ENCODE measurements at regions of chr1 and their contacts with region 1.

Region 1: GRCh38 chr1:25247024-25247828 is at the start of gene RSRP1:
- DNase-seq: peak; percentile 99
- H3K4me3 Mint-ChIP-seq: peak within 1 kb of the TSS; percentile 96
- H3K27ac Mint-ChIP-seq: peak within 1 kb of the TSS; percentile 99
- H3K4me1 Mint-ChIP-seq: peaks cover 44% of the 10 kb centered on the region
- H3K27me3 Mint-ChIP-seq: no peaks in the 10 kb centered on the region
- total RNA-seq, gene RSRP1: 101 to 110 TPM

Region 2: DNA sequence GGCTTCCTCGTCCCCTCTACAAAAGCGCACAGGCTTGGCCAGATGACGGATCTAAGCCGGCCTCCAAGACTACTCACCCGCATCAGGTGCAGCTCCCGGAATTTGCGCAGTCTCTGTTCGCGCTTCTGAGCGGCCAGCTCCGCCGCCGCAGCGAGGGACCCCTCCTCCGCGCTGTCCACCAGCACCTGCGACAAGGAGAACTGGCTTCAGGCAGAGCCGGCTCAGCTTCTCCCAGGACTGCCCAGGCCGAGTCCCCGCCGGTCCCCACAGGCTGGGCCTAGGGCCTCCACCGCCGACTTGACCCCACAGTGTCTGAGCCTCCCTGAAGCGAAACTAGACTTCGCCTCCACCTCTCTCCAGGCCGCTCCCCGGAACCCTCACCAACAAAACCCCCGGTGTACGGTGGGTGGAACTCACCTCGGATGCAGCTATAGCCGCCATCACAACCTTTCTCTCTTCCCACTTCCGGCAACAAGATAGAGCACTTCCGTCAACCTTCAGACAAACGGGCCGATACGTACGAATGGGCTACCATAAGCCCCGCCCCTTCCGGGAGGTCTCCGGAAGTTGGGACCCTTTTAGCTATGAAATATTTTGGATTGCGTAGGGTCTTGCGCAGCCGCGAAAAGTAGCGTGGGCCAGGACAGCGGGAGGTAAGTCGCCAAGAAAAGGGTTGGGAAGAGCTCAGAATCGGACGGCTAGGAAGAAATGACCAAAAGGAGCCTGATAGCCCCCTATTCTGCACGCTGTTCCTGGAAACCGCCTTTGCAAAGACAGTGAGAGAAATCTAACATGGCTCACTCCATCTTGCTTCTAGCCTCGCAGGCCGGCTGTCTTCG is 15.0 kb before region 1 on chr1 and contains the start of gene SYF2:
- CTCF ChIA-PET with region 1: interaction called, 3 read pairs
- intact Hi-C with region 1: loop called (anchors 1 kb)
- DNase-seq: peak; percentile 92
- H3K4me3 Mint-ChIP-seq: no peak within 1 kb of the TSS
- H3K27ac Mint-ChIP-seq: no peak within 1 kb of the TSS
- H3K4me1 Mint-ChIP-seq: peaks cover 34% of the 10 kb centered on the region
- H3K27me3 Mint-ChIP-seq: no peaks in the 10 kb centered on the region
- total RNA-seq, gene SYF2: 39.7 to 46.8 TPM

Region 3: DNA sequence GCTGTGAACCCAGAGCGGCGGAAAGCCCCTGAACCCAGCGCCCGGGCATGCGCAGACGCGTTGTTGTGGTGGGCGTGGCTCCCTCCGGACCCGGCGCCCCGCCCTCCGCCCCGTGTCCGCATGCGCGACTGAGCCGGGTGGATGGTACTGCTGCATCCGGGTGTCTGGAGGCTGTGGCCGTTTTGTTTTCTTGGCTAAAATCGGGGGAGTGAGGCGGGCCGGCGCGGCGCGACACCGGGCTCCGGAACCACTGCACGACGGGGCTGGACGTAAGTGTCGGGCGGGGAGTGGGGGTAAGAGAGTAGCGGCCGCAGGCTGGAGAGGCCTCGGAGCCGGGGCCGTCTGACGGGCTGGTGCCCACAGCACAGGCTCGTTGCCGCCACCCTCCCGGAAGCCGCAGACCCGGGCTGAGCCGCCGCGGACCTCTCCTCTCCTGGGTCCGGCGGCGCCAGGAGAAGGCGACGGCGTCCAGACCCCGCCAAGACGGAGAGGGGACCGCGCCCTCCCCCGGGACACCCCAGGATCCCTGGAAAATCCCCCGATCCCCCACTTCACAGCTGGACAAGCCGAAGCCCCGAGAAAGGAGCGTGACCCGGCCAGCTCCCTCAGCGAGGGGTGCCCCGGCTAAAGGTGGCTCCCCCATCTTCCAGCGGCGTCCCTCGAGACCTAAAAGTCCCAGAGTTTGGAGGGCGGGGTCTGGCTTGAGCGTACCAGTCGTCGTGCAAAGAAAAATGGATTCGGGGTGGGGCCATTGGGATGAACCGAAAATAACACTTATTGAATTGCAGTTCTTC is 91.2 kb after region 1 on chr1 and contains the start of gene TMEM50A:
- CTCF ChIA-PET with region 1: no interaction called
- intact Hi-C with region 1: loop called (anchors 5 kb)
- DNase-seq: peak; percentile 91
- H3K4me3 Mint-ChIP-seq: peak within 1 kb of the TSS; percentile 93
- H3K27ac Mint-ChIP-seq: peak within 1 kb of the TSS; percentile 93
- H3K4me1 Mint-ChIP-seq: peaks cover 28% of the 10 kb centered on the region
- H3K27me3 Mint-ChIP-seq: no peaks in the 10 kb centered on the region
- total RNA-seq, gene TMEM50A: 96.2 to 98.3 TPM

Region 4: GRCh38 chr1:25837262-25837875 is 590.1 kb after region 1 on chr1:
- CTCF ChIA-PET with region 1: no interaction called
- intact Hi-C with region 1: no loop called
- DNase-seq: no peak
- H3K4me3 Mint-ChIP-seq: no peak overlapping the region
- H3K27ac Mint-ChIP-seq: no peak overlapping the region
- H3K4me1 Mint-ChIP-seq: peaks cover 1% of the 10 kb centered on the region
- H3K27me3 Mint-ChIP-seq: no peaks in the 10 kb centered on the region